WTC11 (cell line): ENCODE measurements at regions of chr9 and their contacts with region 1.

Region 1: GRCh38 chr9:74044844-74045243 is 452.3 kb upstream of the RORB start:
- DNase-seq: no peak
- ATAC-seq: peak; percentile 65
- H3K4me3 Mint-ChIP-seq: no peak overlapping the region
- H3K27ac Mint-ChIP-seq: peak overlapping the region; percentile 53; the same call in 1 of the 2 replicates
- H3K4me1 Mint-ChIP-seq: peaks cover 11% of the 10 kb centered on the region
- H3K27me3 Mint-ChIP-seq: no peaks in the 10 kb centered on the region
- CTCF ChIP-seq: no peak

Region 2: GRCh38 chr9:73892335-73892734 is 152.5 kb before region 1 on chr9:
- CTCF ChIA-PET with region 1: no interaction called
- POLR2A ChIA-PET with region 1: no interaction called
- DNase-seq: no peak
- ATAC-seq: no peak
- H3K4me3 Mint-ChIP-seq: no peak overlapping the region
- H3K27ac Mint-ChIP-seq: no peak overlapping the region
- H3K4me1 Mint-ChIP-seq: no peaks in the 10 kb centered on the region
- H3K27me3 Mint-ChIP-seq: no peaks in the 10 kb centered on the region
- CTCF ChIP-seq: no peak

Region 3: GRCh38 chr9:74095925-74096324 is 51.1 kb after region 1 on chr9:
- CTCF ChIA-PET with region 1: no interaction called
- POLR2A ChIA-PET with region 1: interaction called, 10 read pairs
- DNase-seq: no peak
- ATAC-seq: no peak; the same call in 1 of the 2 replicates
- H3K4me3 Mint-ChIP-seq: no peak overlapping the region
- H3K27ac Mint-ChIP-seq: no peak overlapping the region
- H3K4me1 Mint-ChIP-seq: peaks cover 40% of the 10 kb centered on the region
- H3K27me3 Mint-ChIP-seq: peaks cover 12% of the 10 kb centered on the region
- CTCF ChIP-seq: no peak